GM12878 (cell line): ENCODE measurements at regions of chr17 and their contacts with region 1.

Region 1: GRCh38 chr17:65198653-65199382 is 61.6 kb downstream of the RGS9 start:
- DNase-seq: peak; percentile 38
- ATAC-seq: peak; percentile 78
- H3K4me3 ChIP-seq: no peak overlapping the region
- H3K27ac ChIP-seq: no peak overlapping the region
- H3K4me1 ChIP-seq: no peaks in the 10 kb centered on the region
- H3K27me3 ChIP-seq: no peaks in the 10 kb centered on the region
- CTCF ChIP-seq: peak; percentile 48 to 85 (median 65)
- EP300 ChIP-seq: no peak
- POLR2A ChIP-seq: no peak
- RAD21 ChIP-seq: peak; percentile 91

Region 2: DNA sequence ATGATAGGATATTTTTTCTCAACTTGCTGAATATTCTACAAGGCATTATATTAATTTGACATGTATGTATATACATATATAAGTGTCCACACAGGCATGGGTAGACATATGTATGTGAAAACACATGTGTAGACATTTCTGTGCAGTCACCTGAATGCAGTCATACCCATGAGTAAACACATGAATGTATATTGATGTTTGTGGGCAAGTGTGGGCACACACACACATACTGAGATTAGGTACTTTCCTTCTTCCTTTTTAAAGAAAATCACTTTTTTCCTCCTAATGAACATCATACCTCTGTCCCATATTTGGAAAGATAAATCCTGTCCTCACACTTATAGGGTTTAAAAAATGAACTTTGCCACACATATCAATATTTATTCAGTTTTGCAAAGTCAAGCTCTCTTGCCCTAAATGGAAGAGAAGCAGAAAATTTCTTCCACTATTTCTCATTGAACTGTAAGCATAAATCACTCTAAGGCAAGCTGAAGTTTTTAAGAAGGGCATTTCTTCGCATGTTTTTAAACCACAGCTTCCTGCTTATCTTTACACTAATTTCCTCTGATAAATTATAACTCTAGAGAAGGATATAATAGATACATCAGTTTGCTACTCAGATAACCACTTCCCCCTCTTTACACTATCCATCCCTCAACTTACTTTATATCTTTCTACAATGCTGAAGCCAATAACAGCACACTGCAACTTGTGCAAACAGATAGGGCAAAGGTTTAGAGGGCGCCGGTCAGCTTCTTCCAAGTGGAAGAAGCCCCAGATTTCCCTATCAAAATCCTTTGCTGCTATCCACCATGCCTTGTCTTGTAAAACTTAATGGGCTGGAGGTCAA is 229.9 kb before region 1 on chr17:
- CTCF ChIA-PET with region 1: interaction called, 13 read pairs
- POLR2A ChIA-PET with region 1: no interaction called
- RAD21 ChIA-PET with region 1: interaction called, 3 read pairs
- SMC1A ChIA-PET with region 1: interaction called, 6 read pairs
- in situ Hi-C with region 1: no loop called
- intact Hi-C with region 1: no loop called
- DNase-seq: peak; percentile 20
- ATAC-seq: peak; percentile 66
- H3K4me3 ChIP-seq: no peak overlapping the region
- H3K27ac ChIP-seq: peak overlapping the region; percentile 45
- H3K4me1 ChIP-seq: peaks cover 42% of the 10 kb centered on the region
- H3K27me3 ChIP-seq: no peaks in the 10 kb centered on the region
- CTCF ChIP-seq: no peak
- EP300 ChIP-seq: no peak
- POLR2A ChIP-seq: no peak
- RAD21 ChIP-seq: no peak

Region 3: DNA sequence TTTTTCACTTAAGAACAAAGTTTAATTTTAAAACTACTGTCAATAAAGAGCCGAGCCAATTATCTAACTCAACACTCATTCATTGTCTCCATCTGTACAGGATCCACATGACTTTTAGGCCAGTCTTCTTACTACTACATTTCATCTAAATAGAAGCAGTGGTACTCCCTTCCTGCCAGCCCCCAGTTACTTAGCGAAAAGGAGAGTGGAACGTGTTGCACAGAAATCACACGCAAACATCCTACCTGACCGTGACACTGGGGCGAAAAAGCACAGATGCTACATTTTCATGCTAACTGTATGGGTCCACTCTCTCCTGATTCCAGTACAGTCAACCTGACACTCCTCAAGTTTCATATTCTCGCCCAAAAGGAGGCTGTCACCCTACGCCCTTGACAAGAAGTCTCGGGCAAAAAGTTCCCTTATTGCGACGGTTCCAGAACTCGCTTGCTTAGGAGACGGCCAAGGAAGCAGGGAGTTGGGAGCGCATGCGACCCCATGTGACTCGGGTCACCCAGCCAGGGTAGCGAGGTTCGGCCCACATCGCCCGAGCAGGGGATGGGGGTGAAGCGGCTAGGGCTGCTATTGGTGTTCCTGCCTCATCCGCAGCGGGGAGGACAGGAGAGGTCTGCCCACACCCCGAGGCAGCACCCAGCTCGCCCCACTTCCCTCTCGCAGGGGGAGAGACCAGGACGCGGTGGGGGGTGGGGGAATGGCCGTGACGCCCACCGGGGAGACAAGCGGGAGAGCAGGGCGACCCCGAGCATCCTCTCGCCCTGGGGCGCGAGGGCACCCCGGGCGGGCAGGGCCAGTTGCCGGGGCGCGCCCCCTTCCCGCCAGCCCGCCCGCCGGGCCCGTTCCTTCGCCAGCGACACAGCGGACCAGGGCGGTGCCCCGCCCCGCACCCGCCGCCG is 143.2 kb before region 1 on chr17:
- CTCF ChIA-PET with region 1: no interaction called
- POLR2A ChIA-PET with region 1: no interaction called
- RAD21 ChIA-PET with region 1: no interaction called
- SMC1A ChIA-PET with region 1: interaction called, 4 read pairs
- in situ Hi-C with region 1: no loop called
- intact Hi-C with region 1: loop called (anchors 2 kb)
- DNase-seq: no peak
- ATAC-seq: peak; percentile 65
- H3K4me3 ChIP-seq: peak overlapping the region; percentile 98
- H3K27ac ChIP-seq: peak overlapping the region; percentile 95
- H3K4me1 ChIP-seq: peaks cover 5% of the 10 kb centered on the region; the same call in 1 of the 2 replicates
- H3K27me3 ChIP-seq: no peaks in the 10 kb centered on the region
- CTCF ChIP-seq: no peak
- EP300 ChIP-seq: no peak
- POLR2A ChIP-seq: no peak; the same call in 1 of the 2 replicates
- RAD21 ChIP-seq: no peak

Region 4: GRCh38 chr17:65085397-65085796 is 113.4 kb before region 1 on chr17:
- CTCF ChIA-PET with region 1: no interaction called
- POLR2A ChIA-PET with region 1: no interaction called
- RAD21 ChIA-PET with region 1: no interaction called
- SMC1A ChIA-PET with region 1: no interaction called
- in situ Hi-C with region 1: no loop called
- intact Hi-C with region 1: no loop called
- DNase-seq: no peak
- ATAC-seq: no peak
- H3K4me3 ChIP-seq: no peak overlapping the region
- H3K27ac ChIP-seq: no peak overlapping the region
- H3K4me1 ChIP-seq: no peaks in the 10 kb centered on the region
- H3K27me3 ChIP-seq: no peaks in the 10 kb centered on the region
- CTCF ChIP-seq: no peak
- EP300 ChIP-seq: no peak
- POLR2A ChIP-seq: no peak
- RAD21 ChIP-seq: no peak

Region 5: GRCh38 chr17:65137021-65137991 is 61.5 kb before region 1 on chr17 and contains the start of gene RGS9:
- CTCF ChIA-PET with region 1: interaction called, 30 read pairs
- POLR2A ChIA-PET with region 1: no interaction called
- RAD21 ChIA-PET with region 1: interaction called, 5 read pairs
- SMC1A ChIA-PET with region 1: interaction called, 4 read pairs
- in situ Hi-C with region 1: no loop called
- intact Hi-C with region 1: loop called (anchors 2 kb)
- DNase-seq: peak; percentile 38
- ATAC-seq: peak; percentile 98
- H3K4me3 ChIP-seq: peak within 1 kb of the TSS; percentile 66
- H3K27ac ChIP-seq: 0 out of 2 replicates have a peak within 1 kb of the TSS, but pooled peaks have one; percentile 21
- H3K4me1 ChIP-seq: peaks cover 8% of the 10 kb centered on the region
- H3K27me3 ChIP-seq: no peaks in the 10 kb centered on the region
- CTCF ChIP-seq: peak; percentile 83 to 92 (median 89)
- EP300 ChIP-seq: no peak
- POLR2A ChIP-seq: no peak
- RAD21 ChIP-seq: peak; percentile 77
- polyA plus RNA-seq, gene RGS9: 3.0 to 4.1 TPM

Region 6: GRCh38 chr17:65181237-65182061 is 17.4 kb before region 1 on chr17:
- CTCF ChIA-PET with region 1: interaction called, 29 read pairs
- POLR2A ChIA-PET with region 1: no interaction called
- RAD21 ChIA-PET with region 1: interaction called, 7 read pairs
- SMC1A ChIA-PET with region 1: interaction called, 19 read pairs
- in situ Hi-C with region 1: no loop called
- intact Hi-C with region 1: no loop called
- DNase-seq: peak; percentile 90
- ATAC-seq: peak; percentile 82
- H3K4me3 ChIP-seq: no peak overlapping the region
- H3K27ac ChIP-seq: peak overlapping the region; percentile 99
- H3K4me1 ChIP-seq: peaks cover 49% of the 10 kb centered on the region
- H3K27me3 ChIP-seq: no peaks in the 10 kb centered on the region
- CTCF ChIP-seq: no peak
- EP300 ChIP-seq: peak; percentile 81 to 93; a peak in 3 of 4 replicates
- POLR2A ChIP-seq: 0 out of 2 replicates have a peak, but pooled peaks have one; percentile 11
- RAD21 ChIP-seq: no peak